ENCODE measurements at regions of chr12 and their contacts with region 1.

Region 1: DNA sequence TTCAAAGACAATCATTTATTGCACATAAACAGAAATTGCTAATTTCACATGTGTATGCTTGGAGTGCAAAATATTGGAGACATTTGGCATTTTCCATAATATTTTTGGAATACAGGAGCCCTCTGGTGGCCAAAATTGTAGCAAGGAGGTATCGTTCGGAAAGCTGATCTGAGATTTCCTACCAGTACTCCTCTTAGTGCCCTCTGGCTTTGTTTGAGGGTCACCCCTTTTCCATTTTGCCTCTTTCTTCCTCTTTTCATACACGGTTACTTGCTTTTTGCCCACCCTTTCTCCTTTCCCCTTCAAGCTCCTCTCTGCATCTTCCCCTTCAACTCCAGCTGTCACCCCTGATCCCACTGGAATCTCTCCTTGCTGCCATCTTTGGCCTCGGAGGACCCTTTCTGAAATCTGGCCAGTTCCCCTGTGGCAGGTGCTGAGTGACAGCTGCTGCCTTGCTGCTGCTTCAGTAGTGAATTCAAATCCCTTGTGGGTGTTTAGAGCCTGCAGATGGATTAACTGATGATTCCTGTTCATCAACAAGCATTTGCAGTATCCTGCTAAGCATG is 164.6 kb upstream of the PARP11 start:
- DNase-seq: peak in 1 of 3 donors; percentile 89
- ATAC-seq: peak; percentile 46
- H3K4me3 ChIP-seq: no peak overlapping the region
- H3K4me1 ChIP-seq: peaks cover 17% of the 10 kb centered on the region
- CTCF ChIP-seq: peak; percentile 47

Region 2: GRCh38 chr12:3998968-3999826 is 38.6 kb before region 1 on chr12:
- intact Hi-C with region 1: loop called (anchors 5 kb)
- DNase-seq: peak in 1 of 3 donors; percentile 77
- ATAC-seq: peak; percentile 92
- H3K4me3 ChIP-seq: no peak overlapping the region
- H3K4me1 ChIP-seq: peaks cover 7% of the 10 kb centered on the region
- CTCF ChIP-seq: no peak

Measured in mucosa of descending colon (tissue), 3 donors.